ENCODE measurements at regions of chr1 and their contacts with region 1.

Region 1: DNA sequence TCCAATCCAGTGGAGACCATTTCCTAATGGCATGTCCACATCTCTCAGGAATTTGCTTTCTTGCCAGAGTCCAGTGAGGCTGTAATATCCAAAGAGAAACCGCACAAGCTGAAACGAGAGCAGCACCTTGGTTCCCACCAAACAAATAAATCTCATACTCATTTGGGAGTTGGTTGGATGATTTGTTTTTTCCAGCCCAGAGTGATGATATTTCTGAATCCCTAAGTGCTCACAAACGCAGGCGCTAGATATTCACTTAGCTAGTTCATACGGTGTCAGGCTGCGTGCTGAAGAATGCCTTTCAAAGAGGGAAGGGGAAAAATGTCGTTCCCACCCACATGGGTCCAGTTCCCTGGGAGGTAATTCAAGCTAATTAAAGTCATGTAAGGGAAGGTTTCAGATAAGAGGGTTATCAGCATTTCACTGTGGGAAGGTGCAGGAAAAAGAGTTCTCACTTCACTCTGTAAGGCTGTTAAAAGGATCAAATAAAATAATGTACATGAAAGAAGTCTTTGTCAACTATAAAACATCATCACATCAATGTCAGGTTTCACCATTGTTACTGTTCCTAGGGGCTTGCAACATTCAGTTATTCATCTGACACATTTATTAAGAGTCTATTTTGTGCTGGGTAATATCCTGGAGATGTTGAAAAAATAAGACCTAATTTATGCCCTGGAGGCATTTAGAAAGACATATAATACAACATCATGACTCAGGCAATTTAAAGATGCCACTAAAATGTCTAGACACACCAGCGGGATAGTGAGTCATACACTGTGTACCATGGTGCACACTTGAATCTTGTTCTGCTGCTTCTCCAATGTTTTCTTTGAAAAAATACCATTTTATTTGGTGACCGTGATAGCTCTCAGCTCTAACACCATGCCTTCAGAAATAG is 19.4 kb downstream of the DPT start:
- DNase-seq: peak; percentile 50 to 98
- H3K4me3 ChIP-seq: peak overlapping the region; percentile 25; the same call in 1 of the 2 replicates
- H3K27ac ChIP-seq: peak overlapping the region; percentile 93
- H3K4me1 ChIP-seq: peaks cover 27% of the 10 kb centered on the region
- H3K27me3 ChIP-seq: no peaks in the 10 kb centered on the region
- CTCF ChIP-seq: no peak

Region 2: GRCh38 chr1:168129933-168130332 is 579.7 kb before region 1 on chr1:
- CTCF ChIA-PET with region 1: no interaction called
- POLR2A ChIA-PET with region 1: no interaction called
- intact Hi-C with region 1: no loop called
- DNase-seq: no peak
- H3K4me3 ChIP-seq: no peak overlapping the region
- H3K27ac ChIP-seq: no peak overlapping the region
- H3K4me1 ChIP-seq: no peaks in the 10 kb centered on the region
- H3K27me3 ChIP-seq: no peaks in the 10 kb centered on the region
- CTCF ChIP-seq: no peak

Region 3: DNA sequence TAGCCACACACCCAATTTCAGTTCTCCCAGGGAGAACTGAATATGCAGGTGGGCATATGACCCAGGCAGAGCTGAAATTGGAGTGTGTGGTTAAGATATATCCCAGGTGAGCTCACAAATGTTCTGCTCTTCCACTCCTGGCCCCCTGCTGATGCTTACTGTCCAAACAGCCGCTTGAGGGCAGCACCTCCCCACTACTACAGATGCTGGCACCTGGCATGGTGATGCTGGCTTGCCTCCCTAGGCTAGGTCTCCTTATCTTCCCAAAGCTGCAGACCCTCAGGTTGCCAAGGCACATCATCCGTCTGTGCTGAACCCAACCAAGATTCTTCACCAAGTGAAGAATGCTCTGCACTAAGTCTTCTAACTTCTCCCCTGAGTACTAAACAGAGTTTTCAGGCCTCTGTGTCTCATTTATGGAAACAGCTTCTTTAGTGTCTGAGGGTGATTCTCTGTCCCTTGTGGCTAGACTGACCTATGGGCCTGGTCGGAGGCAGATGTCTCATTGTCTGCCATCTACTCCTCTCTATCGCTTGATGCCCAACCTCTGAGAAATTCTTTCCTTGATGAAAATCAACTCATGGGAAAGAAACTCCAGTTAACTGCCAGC is 106.0 kb before region 1 on chr1:
- CTCF ChIA-PET with region 1: no interaction called
- POLR2A ChIA-PET with region 1: no interaction called
- intact Hi-C with region 1: loop called (anchors 2 kb)
- DNase-seq: peak; percentile 47 to 71
- H3K4me3 ChIP-seq: no peak overlapping the region
- H3K27ac ChIP-seq: no peak overlapping the region
- H3K4me1 ChIP-seq: 0 out of 2 replicates have a peak, but pooled peaks cover 5% of the 10 kb centered on the region
- H3K27me3 ChIP-seq: no peaks in the 10 kb centered on the region
- CTCF ChIP-seq: peak; percentile 95

Region 4: DNA sequence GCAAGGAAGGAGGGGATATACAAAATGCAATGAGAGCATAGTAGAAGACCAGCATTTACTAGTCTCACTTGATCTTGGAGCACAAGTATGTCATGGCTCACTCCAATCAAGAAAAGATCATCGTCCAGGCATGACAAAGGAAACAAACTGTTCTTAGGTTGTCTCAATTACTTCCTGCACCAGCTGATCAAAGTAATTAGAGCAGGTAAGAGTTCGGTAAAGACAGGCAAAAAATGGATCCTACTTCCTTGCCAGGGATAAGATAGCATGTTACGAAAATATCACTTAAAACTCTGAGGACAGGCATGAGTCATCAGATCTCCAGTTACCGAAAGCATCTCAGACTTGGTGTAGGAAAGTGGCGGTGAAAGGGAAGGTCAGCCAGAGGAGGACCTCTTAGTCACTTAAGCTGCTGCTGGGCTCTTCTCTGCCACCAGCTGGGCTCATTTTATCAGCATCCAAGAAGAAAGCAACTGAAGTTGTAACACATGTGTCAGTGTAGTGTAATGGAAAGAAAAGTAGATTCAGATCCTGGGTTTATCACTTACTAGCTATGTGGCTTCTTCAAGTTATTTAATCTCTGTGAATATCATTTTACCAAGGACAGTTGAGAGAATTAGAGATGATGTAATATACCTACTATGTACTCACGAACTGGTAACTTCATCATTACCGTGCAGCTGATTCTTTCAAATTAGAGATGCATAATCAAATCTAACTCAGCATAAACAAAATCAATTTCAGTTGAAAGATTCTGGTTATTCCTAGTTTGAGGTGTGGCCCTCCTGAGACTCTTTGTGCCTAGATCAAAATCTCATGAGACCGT is 86.4 kb before region 1 on chr1:
- CTCF ChIA-PET with region 1: no interaction called
- POLR2A ChIA-PET with region 1: no interaction called
- intact Hi-C with region 1: loop called (anchors 2 kb)
- DNase-seq: peak; percentile 61 to 89
- H3K4me3 ChIP-seq: no peak overlapping the region
- H3K27ac ChIP-seq: peak overlapping the region; percentile 43
- H3K4me1 ChIP-seq: peaks cover 14% of the 10 kb centered on the region; the same call in 1 of the 2 replicates
- H3K27me3 ChIP-seq: no peaks in the 10 kb centered on the region
- CTCF ChIP-seq: no peak

Region 5: DNA sequence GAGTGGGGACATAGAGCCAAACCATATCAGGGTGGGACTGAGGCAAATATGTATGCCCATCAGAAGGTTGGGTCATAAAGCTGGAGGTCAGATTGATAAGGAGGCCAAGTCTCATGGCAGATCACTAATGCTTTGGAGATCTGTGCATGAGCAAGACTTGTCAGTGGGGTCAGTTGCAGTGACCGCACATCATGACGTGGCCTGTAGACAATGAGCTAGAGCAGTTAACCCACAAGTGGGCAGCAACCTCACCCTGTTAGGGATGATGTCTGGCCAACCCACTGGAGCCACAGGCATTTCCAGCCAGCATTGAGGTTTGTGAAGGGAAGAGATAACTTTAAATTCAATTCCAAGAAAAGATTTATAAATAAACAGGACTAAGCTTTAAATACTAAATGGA is 66.5 kb before region 1 on chr1:
- CTCF ChIA-PET with region 1: no interaction called
- POLR2A ChIA-PET with region 1: no interaction called
- intact Hi-C with region 1: loop called (anchors 10 kb)
- DNase-seq: no peak
- H3K4me3 ChIP-seq: no peak overlapping the region
- H3K27ac ChIP-seq: no peak overlapping the region
- H3K4me1 ChIP-seq: no peaks in the 10 kb centered on the region
- H3K27me3 ChIP-seq: no peaks in the 10 kb centered on the region
- CTCF ChIP-seq: no peak

Region 6: DNA sequence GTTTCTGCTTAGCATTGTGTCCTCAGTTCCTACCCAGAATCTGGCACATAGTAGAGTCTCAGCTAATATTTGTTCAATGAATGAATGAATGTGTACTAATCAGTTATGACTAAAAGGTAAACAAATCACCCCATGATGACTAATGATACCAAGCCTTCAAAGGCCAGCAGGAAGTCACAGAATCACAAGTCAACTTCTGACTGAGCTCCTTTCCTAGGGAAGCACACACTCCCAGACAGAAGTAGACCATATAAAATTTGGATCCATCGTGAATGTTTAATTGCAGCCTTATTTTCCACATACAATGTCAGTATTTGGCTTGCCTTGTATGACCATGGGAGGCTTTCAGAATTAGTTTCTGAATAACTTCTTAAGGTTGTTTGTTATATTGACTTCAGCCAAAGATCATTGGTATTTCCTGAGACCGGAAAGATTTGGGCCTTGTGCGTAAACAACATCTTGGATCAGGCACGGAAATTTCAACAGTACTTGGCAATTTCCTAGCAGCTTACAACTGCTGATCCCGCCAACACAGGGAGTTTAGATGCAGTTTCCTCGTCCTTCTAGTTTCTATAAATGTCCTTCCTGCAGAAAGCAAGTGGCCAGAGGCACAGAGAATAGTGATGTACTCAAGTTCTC is 210.9 kb after region 1 on chr1:
- CTCF ChIA-PET with region 1: no interaction called
- POLR2A ChIA-PET with region 1: no interaction called
- intact Hi-C with region 1: loop called (anchors 10 kb)
- DNase-seq: peak in 1 of 2 experiments; percentile 89
- H3K4me3 ChIP-seq: no peak overlapping the region
- H3K27ac ChIP-seq: peak overlapping the region; percentile 81
- H3K4me1 ChIP-seq: peaks cover 75% of the 10 kb centered on the region
- H3K27me3 ChIP-seq: no peaks in the 10 kb centered on the region
- CTCF ChIP-seq: no peak

Region 7: DNA sequence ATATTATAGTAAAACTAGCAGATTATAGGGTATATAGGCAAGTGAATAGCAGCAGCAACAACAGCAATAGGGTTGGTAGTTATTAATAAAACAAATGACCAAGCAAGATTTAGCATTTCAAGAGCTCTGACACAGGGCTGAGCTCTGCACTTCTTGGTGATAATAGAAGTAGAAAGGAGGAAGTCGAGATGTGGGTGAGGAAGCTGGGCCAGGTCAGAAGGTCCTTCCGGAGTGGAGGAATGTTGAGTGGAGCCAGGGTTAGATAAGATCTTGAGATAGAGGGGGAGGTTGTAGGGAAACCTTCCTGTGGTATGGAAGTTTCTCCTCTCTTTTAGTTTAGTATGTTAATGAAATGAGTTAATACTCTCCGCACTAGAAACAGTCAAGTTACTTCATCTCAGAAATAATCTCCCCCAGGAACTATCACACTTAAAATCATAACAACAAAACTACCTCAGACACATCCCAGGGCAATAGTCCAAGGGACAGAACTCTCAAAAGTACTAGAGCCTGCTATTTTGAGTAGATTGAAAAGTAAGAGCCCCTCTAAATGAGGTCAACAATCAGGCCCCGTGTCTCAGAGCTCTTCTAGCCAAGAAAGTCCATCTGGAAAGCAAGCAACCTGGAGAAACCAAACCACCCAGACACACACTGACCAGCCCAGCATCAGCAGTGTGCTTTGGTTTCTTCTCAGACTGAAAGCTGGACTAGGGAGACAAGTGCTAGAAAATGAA is 351.4 kb after region 1 on chr1:
- CTCF ChIA-PET with region 1: interaction called, 3 read pairs
- POLR2A ChIA-PET with region 1: no interaction called
- intact Hi-C with region 1: loop called (anchors 2 kb)
- DNase-seq: peak in 1 of 2 experiments; percentile 81
- H3K4me3 ChIP-seq: peak overlapping the region; percentile 27; the same call in 1 of the 2 replicates
- H3K27ac ChIP-seq: peak overlapping the region; percentile 92
- H3K4me1 ChIP-seq: peaks cover 49% of the 10 kb centered on the region
- H3K27me3 ChIP-seq: no peaks in the 10 kb centered on the region
- CTCF ChIP-seq: no peak

Region 8: GRCh38 chr1:169348383-169349036 is 638.9 kb after region 1 on chr1:
- CTCF ChIA-PET with region 1: no interaction called
- POLR2A ChIA-PET with region 1: no interaction called
- intact Hi-C with region 1: loop called (anchors 10 kb)
- DNase-seq: no peak
- H3K4me3 ChIP-seq: no peak overlapping the region
- H3K27ac ChIP-seq: no peak overlapping the region
- H3K4me1 ChIP-seq: no peaks in the 10 kb centered on the region
- H3K27me3 ChIP-seq: no peaks in the 10 kb centered on the region
- CTCF ChIP-seq: peak; percentile 91